ENCODE measurements at regions of chr22 and their contacts with region 1.

Region 1: GRCh38 chr22:49930739-49931412 is 12.4 kb downstream of the CRELD2 start:
- DNase-seq: peak in 5 of 9 experiments; percentile 50 to 75 (median 52)
- ATAC-seq: peak; percentile 2
- H3K4me3 ChIP-seq: no peak overlapping the region
- H3K4me3 Mint-ChIP-seq: no peak overlapping the region
- H3K27ac ChIP-seq: no peak overlapping the region
- H3K27ac Mint-ChIP-seq: peak overlapping the region; percentile 25
- H3K4me1 ChIP-seq: peaks cover 40% of the 10 kb centered on the region
- H3K4me1 Mint-ChIP-seq: peaks cover 33% of the 10 kb centered on the region
- H3K27me3 ChIP-seq: no peaks in the 10 kb centered on the region
- H3K27me3 Mint-ChIP-seq: no peaks in the 10 kb centered on the region
- CTCF ChIP-seq: no peak

Region 2: GRCh38 chr22:49767355-49768062 is 163.4 kb before region 1 on chr22:
- CTCF ChIA-PET with region 1: interaction called, 3 read pairs
- POLR2A ChIA-PET with region 1: no interaction called
- intact Hi-C with region 1: loop called (anchors 1 kb)
- DNase-seq: peak in 3 of 9 experiments; percentile 62 to 71 (median 64)
- ATAC-seq: peak; percentile 24
- H3K4me3 ChIP-seq: no peak overlapping the region
- H3K4me3 Mint-ChIP-seq: no peak overlapping the region
- H3K27ac ChIP-seq: no peak overlapping the region
- H3K27ac Mint-ChIP-seq: peak overlapping the region; percentile 19
- H3K4me1 ChIP-seq: peaks cover 3% of the 10 kb centered on the region
- H3K4me1 Mint-ChIP-seq: peaks cover 12% of the 10 kb centered on the region
- H3K27me3 ChIP-seq: no peaks in the 10 kb centered on the region
- H3K27me3 Mint-ChIP-seq: no peaks in the 10 kb centered on the region
- CTCF ChIP-seq: peak; percentile 71

Region 3: GRCh38 chr22:49894322-49895054 is 36.4 kb before region 1 on chr22:
- CTCF ChIA-PET with region 1: no interaction called
- POLR2A ChIA-PET with region 1: no interaction called
- intact Hi-C with region 1: no loop called
- DNase-seq: no peak
- ATAC-seq: no peak
- H3K4me3 ChIP-seq: no peak overlapping the region
- H3K4me3 Mint-ChIP-seq: no peak overlapping the region
- H3K27ac ChIP-seq: no peak overlapping the region
- H3K27ac Mint-ChIP-seq: peak overlapping the region; percentile 66
- H3K4me1 ChIP-seq: no peaks in the 10 kb centered on the region
- H3K4me1 Mint-ChIP-seq: peaks cover 8% of the 10 kb centered on the region
- H3K27me3 ChIP-seq: no peaks in the 10 kb centered on the region
- H3K27me3 Mint-ChIP-seq: no peaks in the 10 kb centered on the region
- CTCF ChIP-seq: no peak

Region 4: DNA sequence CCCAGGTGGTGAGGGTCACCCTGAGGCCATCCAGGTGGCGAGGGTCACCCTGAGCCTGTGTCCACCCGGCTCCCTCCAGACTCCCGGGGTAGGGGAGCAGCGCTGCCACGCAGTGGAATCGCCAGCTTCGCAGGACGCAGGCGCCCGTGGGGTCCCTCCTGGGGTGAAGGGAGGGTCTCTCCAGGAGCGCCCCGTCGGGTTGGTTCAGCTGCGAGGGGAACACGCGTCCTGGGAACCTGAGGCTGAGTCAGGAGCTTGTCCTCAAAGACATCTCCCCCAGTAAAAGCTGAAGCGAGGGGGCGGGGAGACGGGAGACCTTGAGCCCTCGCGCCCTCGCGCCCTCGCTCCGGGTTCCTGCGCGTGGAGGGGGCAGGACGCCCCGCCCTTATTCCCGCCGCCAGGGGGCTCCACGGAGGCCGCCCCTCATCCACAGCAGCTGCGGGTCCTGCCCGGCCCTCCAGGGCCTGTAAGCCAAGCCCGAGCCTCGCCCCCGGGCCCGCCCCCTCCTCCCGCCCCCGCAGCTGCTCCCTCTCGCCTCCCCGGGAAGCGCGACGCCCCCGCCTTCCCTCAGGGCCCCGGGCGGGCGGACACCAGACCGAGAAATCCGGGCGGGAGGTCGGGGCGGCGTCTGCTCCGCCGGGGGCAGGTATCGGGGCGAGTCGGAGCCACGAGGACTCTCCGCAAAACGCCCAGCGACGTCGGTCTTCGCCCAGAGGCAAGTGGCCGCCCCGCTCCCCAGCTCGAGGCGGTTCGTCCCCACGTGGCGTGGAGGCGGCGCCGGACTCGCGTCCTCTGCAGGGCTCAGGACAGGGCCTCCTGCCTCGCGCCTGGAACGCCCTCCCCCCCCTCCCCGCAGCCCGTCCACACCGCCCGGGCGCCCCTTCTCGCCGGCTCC is 52.5 kb after region 1 on chr22:
- CTCF ChIA-PET with region 1: interaction called, 9 read pairs
- POLR2A ChIA-PET with region 1: no interaction called
- intact Hi-C with region 1: loop called in 1 of 2 experiments (anchors 2 kb)
- DNase-seq: peak in 6 of 9 experiments; percentile 45 to 74 (median 67)
- ATAC-seq: peak; percentile 85
- H3K4me3 ChIP-seq: no peak overlapping the region
- H3K4me3 Mint-ChIP-seq: no peak overlapping the region
- H3K27ac ChIP-seq: no peak overlapping the region
- H3K27ac Mint-ChIP-seq: no peak overlapping the region
- H3K4me1 ChIP-seq: peaks cover 4% of the 10 kb centered on the region
- H3K4me1 Mint-ChIP-seq: peaks cover 3% of the 10 kb centered on the region
- H3K27me3 ChIP-seq: peaks cover 0 to 9% of the 10 kb centered on the region in 2 experiments
- H3K27me3 Mint-ChIP-seq: peaks cover 20% of the 10 kb centered on the region
- CTCF ChIP-seq: peak; percentile 46

Region 5: GRCh38 chr22:49992921-49993648 is 62.2 kb after region 1 on chr22:
- CTCF ChIA-PET with region 1: interaction called, 56 read pairs
- POLR2A ChIA-PET with region 1: no interaction called
- intact Hi-C with region 1: loop called (anchors 1 kb)
- DNase-seq: peak; percentile 39 to 85 (median 74)
- ATAC-seq: peak; percentile 95
- H3K4me3 ChIP-seq: no peak overlapping the region
- H3K4me3 Mint-ChIP-seq: no peak overlapping the region
- H3K27ac ChIP-seq: no peak overlapping the region
- H3K27ac Mint-ChIP-seq: peak overlapping the region; percentile 21
- H3K4me1 ChIP-seq: peaks cover 8% of the 10 kb centered on the region
- H3K4me1 Mint-ChIP-seq: peaks cover 5% of the 10 kb centered on the region
- H3K27me3 ChIP-seq: no peaks in the 10 kb centered on the region
- H3K27me3 Mint-ChIP-seq: peaks cover 3% of the 10 kb centered on the region
- CTCF ChIP-seq: peak; percentile 77

Region 6: DNA sequence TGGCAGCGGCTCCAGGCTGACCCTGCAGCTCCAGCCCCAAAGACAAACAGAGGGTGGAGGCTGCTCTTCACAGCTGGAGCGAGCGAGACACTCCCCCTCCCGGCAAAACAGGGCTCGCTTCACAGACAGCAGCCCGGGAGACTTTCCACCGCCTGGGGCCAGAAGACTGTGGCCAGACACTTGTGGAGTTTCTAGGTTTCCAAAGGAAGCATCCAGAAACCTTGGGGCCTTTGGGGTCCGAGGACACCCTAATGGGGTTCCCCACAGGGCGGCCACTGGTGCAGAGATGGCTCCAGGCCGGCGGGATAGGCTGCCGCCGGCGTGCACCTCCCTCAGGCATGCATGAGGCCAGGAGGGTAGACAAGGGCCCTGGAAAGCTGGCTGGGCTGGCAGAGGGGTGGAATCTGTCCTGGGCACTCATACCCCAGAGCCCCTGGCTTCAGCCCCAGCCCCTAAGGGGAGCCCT is 81.9 kb after region 1 on chr22 and contains the start of gene IL17REL:
- CTCF ChIA-PET with region 1: interaction called, 9 read pairs
- POLR2A ChIA-PET with region 1: no interaction called
- intact Hi-C with region 1: loop called in 1 of 2 experiments (anchors 5 kb)
- DNase-seq: no peak
- ATAC-seq: no peak
- H3K4me3 ChIP-seq: no peak within 1 kb of the TSS
- H3K4me3 Mint-ChIP-seq: peak within 1 kb of the TSS; percentile 35
- H3K27ac ChIP-seq: no peak within 1 kb of the TSS
- H3K27ac Mint-ChIP-seq: peak within 1 kb of the TSS; percentile 64
- H3K4me1 ChIP-seq: peaks cover 36% of the 10 kb centered on the region
- H3K4me1 Mint-ChIP-seq: peaks cover 18% of the 10 kb centered on the region
- H3K27me3 ChIP-seq: peaks cover 12 to 20% of the 10 kb centered on the region in 2 experiments
- H3K27me3 Mint-ChIP-seq: peaks cover 10% of the 10 kb centered on the region
- CTCF ChIP-seq: no peak
- total RNA-seq, gene IL17REL: not detected

Region 7: DNA sequence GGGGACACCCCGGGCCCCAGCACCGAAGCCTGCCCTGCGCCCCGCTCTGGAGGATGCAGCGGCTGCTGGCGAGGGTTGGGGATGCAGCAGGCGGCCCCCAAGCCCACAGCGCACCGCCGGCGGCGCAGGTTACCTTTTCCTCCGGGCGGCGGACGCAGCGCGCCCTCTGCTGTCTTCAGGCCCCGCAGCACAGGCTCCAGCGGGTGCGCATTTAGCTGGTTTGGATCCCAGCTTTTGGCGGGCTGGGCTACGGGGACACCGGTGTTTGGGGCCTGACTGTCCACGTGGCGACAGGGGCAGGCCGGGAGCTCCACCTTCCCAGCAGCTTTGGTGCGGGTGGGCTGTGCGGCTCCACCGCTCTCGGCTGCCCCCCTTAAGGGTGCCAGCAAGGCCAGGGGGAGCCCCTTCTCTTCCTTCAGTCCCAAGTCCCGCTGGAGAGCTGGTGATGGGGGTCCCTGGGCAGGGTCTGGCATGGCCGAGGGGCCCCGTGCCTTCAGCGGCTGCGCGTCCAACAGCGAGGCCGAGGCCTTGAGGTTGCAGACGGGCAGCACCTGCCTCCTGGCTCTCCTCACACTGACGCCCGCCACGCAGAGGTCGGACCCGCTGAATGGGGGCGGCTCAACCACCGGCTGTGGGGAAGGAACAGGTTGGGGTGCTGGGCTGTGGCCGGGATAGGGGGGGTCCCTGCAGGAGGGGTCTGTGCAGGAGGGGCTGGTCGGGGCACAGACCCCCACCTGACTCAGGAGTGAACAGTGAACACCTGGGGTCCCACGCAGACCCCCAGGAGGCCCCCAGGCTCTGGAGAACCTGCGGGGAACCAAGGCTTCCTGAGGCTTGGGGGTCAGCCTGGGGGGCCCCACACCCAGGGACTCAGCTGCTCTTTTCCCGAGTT is 99.7 kb after region 1 on chr22:
- CTCF ChIA-PET with region 1: interaction called, 69 read pairs
- POLR2A ChIA-PET with region 1: interaction called, 3 read pairs
- intact Hi-C with region 1: loop called in 1 of 2 experiments (anchors 1 kb)
- DNase-seq: peak; percentile 59 to 90 (median 83)
- ATAC-seq: peak; percentile 93
- H3K4me3 ChIP-seq: no peak overlapping the region
- H3K4me3 Mint-ChIP-seq: no peak overlapping the region
- H3K27ac ChIP-seq: no peak overlapping the region
- H3K27ac Mint-ChIP-seq: no peak overlapping the region
- H3K4me1 ChIP-seq: peaks cover 20% of the 10 kb centered on the region
- H3K4me1 Mint-ChIP-seq: peaks cover 3% of the 10 kb centered on the region
- H3K27me3 ChIP-seq: peaks cover 0 to 5% of the 10 kb centered on the region in 2 experiments
- H3K27me3 Mint-ChIP-seq: no peaks in the 10 kb centered on the region
- CTCF ChIP-seq: peak; percentile 90

Region 8: DNA sequence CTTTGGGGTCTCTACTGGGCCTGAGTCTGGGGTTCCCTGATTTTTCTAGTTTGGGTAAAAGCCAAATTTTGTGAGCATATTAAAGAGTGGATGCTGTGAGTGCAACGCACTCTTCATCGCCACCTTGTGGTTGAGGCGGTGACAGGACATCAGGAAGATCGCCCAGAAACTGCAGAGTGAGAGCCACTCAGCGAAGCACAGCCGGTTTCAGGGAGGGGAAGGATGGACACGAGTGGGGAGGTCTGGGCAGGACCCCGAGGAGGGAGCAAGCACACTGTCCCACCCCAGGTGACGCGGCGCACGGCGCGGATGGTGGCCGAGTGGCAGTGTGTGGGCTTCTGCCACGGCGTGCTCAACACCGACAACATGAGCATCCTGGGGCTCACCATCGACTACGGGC is 279.0 kb after region 1 on chr22:
- CTCF ChIA-PET with region 1: no interaction called
- POLR2A ChIA-PET with region 1: no interaction called
- intact Hi-C with region 1: loop called in 1 of 2 experiments (anchors 5 kb)
- DNase-seq: peak; percentile 49 to 84 (median 72)
- ATAC-seq: peak; percentile 86
- H3K4me3 ChIP-seq: no peak overlapping the region
- H3K4me3 Mint-ChIP-seq: no peak overlapping the region
- H3K27ac ChIP-seq: no peak overlapping the region
- H3K27ac Mint-ChIP-seq: peak overlapping the region; percentile 88
- H3K4me1 ChIP-seq: peaks cover 7% of the 10 kb centered on the region
- H3K4me1 Mint-ChIP-seq: peaks cover 33% of the 10 kb centered on the region
- H3K27me3 ChIP-seq: no peaks in the 10 kb centered on the region
- H3K27me3 Mint-ChIP-seq: no peaks in the 10 kb centered on the region
- CTCF ChIP-seq: peak; percentile 85

Measured in CD8-positive, alpha-beta T cell (primary cell).